H1 (cell line): ENCODE measurements at regions of chr2 and their contacts with region 1.

Region 1: DNA sequence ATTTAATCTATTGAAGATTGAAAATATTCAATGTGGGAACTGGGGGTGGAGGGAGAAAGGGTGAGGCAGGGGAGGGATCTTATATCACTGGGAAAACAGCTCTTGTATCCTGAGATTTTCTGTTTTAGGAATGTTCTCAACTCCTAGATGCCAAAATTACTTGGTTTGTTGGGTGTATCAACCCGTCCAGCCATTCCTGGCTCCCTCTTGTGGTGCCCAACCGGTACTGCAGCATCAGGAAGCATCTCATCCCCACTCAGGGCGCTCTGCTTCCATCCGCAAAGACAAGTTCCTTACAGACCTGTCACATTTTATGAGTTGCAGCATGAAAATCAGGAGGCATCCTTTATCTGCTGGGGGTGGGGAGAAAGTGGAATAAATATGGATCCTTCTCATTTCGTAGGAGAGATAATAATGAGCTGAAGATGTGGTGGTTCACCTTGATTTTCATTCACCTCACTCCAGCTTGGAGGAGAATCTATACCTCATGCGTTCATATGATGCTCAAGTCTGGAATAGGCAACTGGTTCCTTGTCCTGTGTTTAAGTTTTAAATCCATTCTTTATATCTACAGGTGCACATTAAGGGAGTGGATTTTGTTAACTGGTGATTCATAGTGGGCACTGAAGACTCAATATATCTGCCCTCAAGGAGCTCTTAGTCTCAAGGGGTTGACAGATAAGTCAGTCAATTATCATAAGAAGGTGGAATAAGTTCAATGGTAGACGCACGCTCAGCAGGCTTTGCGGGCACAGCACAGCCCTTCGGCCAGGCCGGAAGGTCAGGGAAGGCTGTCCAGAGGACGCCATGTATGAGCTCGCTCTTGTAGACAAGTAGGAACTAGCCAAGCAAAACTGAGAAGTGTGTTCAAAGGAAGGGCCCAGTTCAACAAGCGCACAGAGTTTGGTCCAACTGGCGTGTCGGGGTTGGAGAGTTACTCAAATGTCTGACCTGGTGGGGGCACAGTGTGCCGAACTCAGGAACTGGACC is 127.3 kb downstream of the RNF144A start:
- DNase-seq: peak; percentile 19 to 80
- H3K4me3 ChIP-seq: no peak overlapping the region
- H3K27ac ChIP-seq: no peak overlapping the region
- H3K4me1 ChIP-seq: peaks cover 0 to 6% (median 2%) of the 10 kb centered on the region in 4 experiments; a peak in 3 of 7 replicates
- H3K27me3 ChIP-seq: no peaks in the 10 kb centered on the region
- CTCF ChIP-seq: peak; percentile 78 to 96 (median 95)
- EP300 ChIP-seq: no peak
- POLR2A ChIP-seq: no peak
- RAD21 ChIP-seq: peak; percentile 59 to 71

Region 2: DNA sequence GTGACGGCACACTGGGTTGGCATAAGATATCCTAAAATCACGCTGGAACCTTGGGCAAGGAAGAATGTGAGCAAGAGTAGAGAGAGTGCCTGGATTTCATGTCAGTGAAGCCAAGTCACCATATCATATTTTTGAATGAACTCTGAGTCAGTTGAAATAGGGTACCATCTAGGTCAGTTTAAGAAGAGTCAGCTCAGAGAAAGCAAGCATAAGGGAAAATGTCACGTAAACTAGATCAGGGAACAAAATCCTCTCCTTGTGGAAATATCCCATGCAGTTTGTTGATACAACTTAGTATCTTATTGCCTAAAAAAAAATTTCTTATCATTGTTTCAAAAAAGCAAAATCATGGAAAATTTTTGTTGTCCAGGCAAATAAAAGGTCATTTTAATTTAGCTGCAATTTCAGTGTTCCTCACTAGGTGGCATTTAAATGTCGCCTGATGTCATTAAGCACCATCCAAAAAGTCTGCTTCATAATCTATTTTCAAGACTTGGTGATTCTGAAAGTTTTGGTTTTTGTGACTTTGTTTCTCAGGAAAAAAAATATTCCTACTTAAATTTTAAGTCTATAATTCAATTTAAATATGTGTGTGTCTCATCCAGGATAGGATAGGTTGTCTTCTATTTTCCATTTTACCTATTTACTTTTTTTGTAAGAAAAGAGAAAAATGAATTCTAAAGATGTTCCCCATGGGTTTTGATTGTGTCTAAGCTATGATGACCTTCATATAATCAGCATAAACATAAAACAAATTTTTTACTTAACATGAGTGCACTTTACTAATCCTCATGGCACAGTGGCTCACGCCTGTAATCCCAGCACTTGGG is 147.4 kb before region 1 on chr2:
- CTCF ChIA-PET with region 1: interaction called, 29 read pairs
- POLR2A ChIA-PET with region 1: no interaction called
- DNase-seq: no peak
- H3K4me3 ChIP-seq: no peak overlapping the region
- H3K27ac ChIP-seq: no peak overlapping the region
- H3K4me1 ChIP-seq: no peaks in the 10 kb centered on the region
- H3K27me3 ChIP-seq: no peaks in the 10 kb centered on the region
- CTCF ChIP-seq: peak in 2 of 3 experiments; percentile 39 to 52; a peak in 2 of 4 replicates
- EP300 ChIP-seq: no peak
- POLR2A ChIP-seq: no peak
- RAD21 ChIP-seq: peak; percentile 63 to 66

Region 3: DNA sequence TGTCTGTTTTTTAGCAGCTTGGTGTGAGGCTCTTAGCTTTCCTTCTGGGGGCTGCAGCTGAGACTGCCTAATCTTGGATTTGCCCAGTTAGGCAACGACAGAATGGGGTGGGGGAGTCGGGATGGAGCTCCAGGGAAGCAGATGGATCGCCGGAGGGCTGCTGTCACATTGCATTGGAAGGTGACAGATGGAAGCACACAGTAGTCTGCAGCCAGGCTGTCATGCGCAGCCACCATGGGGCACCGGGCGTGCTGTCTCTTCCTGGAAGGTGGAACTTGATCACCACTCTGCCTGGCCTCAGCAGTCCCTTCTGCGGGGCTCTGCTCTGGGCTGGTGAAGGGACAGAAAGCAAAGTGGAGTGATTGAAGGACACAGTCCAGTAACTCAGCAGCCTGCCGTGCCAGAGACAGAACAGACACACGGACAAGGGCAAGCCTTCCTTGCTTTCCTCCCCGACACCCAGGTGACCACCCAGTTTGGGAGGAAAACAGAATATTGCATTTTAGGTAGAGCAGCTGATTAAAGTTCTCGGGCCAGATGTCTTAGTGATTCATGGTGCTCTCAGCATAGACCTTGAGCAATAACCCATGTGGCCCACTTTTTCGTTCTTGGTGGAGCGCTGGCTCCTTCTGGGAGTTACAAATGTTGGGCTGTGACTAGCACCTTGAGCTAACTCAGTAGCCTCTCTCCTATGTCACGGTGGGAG is 86.5 kb before region 1 on chr2:
- CTCF ChIA-PET with region 1: interaction called, 12 read pairs
- POLR2A ChIA-PET with region 1: no interaction called
- DNase-seq: no peak
- H3K4me3 ChIP-seq: no peak overlapping the region
- H3K27ac ChIP-seq: no peak overlapping the region
- H3K4me1 ChIP-seq: no peaks in the 10 kb centered on the region; a peak in 1 of 7 replicates
- H3K27me3 ChIP-seq: no peaks in the 10 kb centered on the region
- CTCF ChIP-seq: no peak
- EP300 ChIP-seq: no peak
- POLR2A ChIP-seq: no peak
- RAD21 ChIP-seq: no peak

Region 4: GRCh38 chr2:7014174-7014640 is 30.3 kb before region 1 on chr2:
- CTCF ChIA-PET with region 1: interaction called, 25 read pairs
- POLR2A ChIA-PET with region 1: no interaction called
- DNase-seq: no peak
- H3K4me3 ChIP-seq: no peak overlapping the region
- H3K27ac ChIP-seq: no peak overlapping the region
- H3K4me1 ChIP-seq: peaks cover 0 to 12% (median 6%) of the 10 kb centered on the region in 4 experiments; a peak in 4 of 7 replicates
- H3K27me3 ChIP-seq: no peaks in the 10 kb centered on the region
- CTCF ChIP-seq: peak; percentile 62 to 83 (median 77)
- EP300 ChIP-seq: no peak
- POLR2A ChIP-seq: no peak
- RAD21 ChIP-seq: peak; percentile 45 to 57

Region 5: GRCh38 chr2:7031547-7032245 is 12.9 kb before region 1 on chr2:
- CTCF ChIA-PET with region 1: interaction called, 115 read pairs
- POLR2A ChIA-PET with region 1: no interaction called
- DNase-seq: no peak
- H3K4me3 ChIP-seq: no peak overlapping the region
- H3K27ac ChIP-seq: no peak overlapping the region
- H3K4me1 ChIP-seq: no peaks in the 10 kb centered on the region; a peak in 1 of 7 replicates
- H3K27me3 ChIP-seq: no peaks in the 10 kb centered on the region
- CTCF ChIP-seq: no peak
- EP300 ChIP-seq: no peak
- POLR2A ChIP-seq: no peak
- RAD21 ChIP-seq: no peak

Region 6: DNA sequence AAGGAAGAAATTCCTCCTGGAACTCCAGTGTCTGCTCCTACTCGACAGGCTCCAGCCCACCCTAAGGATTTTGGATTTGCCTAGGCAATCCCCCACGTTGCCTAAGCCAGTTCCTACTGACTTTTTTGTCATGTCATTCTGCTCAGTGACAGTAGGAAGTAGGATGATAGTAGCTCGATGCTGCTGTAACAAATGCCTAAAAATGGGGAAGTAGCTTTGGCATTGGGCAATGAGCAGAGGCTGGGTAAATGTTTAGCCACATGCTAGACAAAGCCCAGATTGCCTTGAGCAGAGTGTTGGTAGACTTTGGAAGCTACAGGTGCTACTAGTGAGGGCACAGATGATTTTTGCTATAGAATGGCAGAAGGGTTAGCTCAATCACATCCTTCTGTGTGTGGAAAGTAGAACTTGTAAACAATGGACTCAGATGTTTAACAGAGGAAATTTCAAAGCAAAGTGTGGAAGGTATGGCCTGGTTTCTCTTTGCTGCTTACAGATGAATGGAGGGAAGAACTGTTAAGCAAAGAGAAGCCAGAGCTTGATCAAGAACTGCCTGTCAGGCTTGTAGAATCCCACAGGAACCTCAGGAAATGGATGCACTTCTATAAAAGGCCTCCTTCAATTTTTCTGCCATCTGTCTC is 27.5 kb after region 1 on chr2:
- CTCF ChIA-PET with region 1: interaction called, 47 read pairs
- POLR2A ChIA-PET with region 1: no interaction called
- DNase-seq: no peak
- H3K4me3 ChIP-seq: no peak overlapping the region
- H3K27ac ChIP-seq: no peak overlapping the region; the same call in 1 of the 2 replicates
- H3K4me1 ChIP-seq: no peaks in the 10 kb centered on the region
- H3K27me3 ChIP-seq: no peaks in the 10 kb centered on the region
- CTCF ChIP-seq: no peak
- EP300 ChIP-seq: no peak
- POLR2A ChIP-seq: no peak
- RAD21 ChIP-seq: no peak

Region 7: DNA sequence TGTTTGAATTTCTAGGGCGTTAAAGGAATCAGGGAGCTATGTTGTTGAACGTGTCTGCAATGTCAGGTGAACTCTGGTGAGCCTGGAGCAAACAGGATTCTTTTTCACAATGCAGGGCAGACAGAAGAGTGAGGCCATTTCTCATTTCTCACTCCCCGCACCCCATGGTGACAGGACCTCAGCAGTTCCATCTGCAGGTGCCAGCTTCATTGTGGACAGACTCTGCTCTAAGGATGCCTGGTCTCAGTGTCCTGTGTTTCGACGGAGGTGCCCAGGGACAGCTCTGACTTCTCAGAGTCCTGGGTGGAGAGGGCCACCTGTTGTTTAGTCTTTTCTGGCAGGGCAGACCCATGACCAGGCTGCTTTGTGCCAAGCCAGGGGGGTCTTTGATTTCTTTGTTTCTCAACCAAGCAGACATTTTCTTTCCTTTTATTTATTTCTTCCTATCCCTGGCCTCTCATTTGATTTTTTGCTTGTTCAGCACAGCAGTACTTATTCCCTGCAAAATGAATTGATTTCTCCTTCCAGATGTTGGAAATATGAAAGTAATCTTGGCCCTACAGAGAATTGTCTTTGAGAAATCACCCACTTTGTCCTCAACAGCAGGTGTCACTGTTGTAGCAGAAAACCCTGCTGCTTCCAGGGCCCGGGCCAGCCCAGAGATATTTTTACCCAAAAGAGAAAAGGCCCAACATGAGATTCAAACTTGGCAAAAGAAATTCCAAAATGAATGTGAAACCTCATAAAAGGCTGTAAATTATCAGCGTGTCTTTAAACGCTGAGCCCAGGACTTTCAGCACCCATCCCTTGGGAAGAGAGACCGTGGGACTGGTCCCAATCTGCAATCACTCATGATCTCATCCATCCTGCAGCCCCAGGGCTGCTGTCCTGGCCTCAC is 74.3 kb after region 1 on chr2:
- CTCF ChIA-PET with region 1: no interaction called
- POLR2A ChIA-PET with region 1: no interaction called
- DNase-seq: no peak
- H3K4me3 ChIP-seq: no peak overlapping the region
- H3K27ac ChIP-seq: no peak overlapping the region
- H3K4me1 ChIP-seq: no peaks in the 10 kb centered on the region; a peak in 2 of 7 replicates
- H3K27me3 ChIP-seq: no peaks in the 10 kb centered on the region
- CTCF ChIP-seq: peak; percentile 39 to 63 (median 60)
- EP300 ChIP-seq: no peak
- POLR2A ChIP-seq: no peak
- RAD21 ChIP-seq: peak; percentile 86 to 90